Dendritic cell treated with granulocyte-macrophage colony-stimulating factor and Interleukin-4, amounts not matched to agents 40 ng/mL and 50 ng/mL, for 4 days (primary cell): ENCODE measurements at regions of chr2 and their contacts with region 1.

Region 1: GRCh38 chr2:17851731-17852585 is 26.5 kb upstream of the KCNS3 start:
- H3K4me3 Mint-ChIP-seq: no peak overlapping the region
- H3K27ac Mint-ChIP-seq: no peak overlapping the region
- H3K4me1 Mint-ChIP-seq: peaks cover under 1% of the 10 kb centered on the region
- H3K27me3 Mint-ChIP-seq: peaks cover 12% of the 10 kb centered on the region

Region 2: DNA sequence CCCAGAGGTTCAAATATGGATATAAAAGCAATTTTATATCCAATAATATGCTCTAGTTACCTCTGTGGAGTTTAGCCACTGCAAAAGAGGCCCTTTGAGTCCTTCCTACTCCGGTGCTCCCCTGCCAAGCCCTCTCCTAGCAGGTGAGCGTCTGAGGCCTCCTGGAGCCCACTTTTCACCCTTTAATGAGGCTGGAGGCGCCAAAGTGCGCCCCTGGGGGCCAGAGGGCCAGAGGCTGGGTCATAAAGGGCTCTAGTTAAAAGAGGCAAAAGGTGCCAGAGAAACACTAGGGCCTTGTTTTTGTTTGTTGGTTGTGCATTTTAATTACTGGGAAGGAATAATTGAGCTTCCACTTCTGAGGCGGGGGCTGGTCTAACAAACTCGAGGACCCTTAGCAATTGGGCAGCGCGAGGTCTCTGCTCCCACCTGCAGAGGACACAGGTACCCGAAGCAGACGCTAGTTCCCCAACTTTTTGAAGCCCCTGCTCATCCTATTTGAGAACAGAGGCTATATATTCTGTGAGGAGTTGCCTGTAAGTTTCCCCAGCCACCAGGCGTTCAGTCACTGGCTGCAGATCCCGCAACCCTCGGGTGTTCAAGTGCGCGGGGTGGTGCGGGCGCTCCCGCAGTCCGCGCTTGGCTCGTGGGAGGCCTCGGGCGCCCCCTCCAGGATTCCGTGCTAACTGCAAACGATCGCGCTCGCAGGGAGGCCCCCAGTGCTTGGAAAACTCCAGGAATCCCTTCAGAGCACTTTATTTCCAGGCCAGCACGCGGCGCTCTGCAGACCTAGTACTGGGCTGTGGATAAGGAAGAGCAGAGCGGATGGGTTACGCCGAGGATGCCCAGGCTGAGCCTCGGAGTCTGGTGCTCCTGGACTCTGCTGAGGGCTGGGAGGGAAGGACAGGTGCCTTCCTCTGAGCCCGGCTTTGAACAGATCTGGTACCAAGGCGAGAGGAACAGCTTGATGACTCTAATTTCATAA is 21.6 kb before region 1 on chr2:
- intact Hi-C with region 1: no loop called
- H3K4me3 Mint-ChIP-seq: peak overlapping the region; percentile 47
- H3K27ac Mint-ChIP-seq: no peak overlapping the region
- H3K4me1 Mint-ChIP-seq: peaks cover 11% of the 10 kb centered on the region
- H3K27me3 Mint-ChIP-seq: peaks cover 20% of the 10 kb centered on the region

Region 3: DNA sequence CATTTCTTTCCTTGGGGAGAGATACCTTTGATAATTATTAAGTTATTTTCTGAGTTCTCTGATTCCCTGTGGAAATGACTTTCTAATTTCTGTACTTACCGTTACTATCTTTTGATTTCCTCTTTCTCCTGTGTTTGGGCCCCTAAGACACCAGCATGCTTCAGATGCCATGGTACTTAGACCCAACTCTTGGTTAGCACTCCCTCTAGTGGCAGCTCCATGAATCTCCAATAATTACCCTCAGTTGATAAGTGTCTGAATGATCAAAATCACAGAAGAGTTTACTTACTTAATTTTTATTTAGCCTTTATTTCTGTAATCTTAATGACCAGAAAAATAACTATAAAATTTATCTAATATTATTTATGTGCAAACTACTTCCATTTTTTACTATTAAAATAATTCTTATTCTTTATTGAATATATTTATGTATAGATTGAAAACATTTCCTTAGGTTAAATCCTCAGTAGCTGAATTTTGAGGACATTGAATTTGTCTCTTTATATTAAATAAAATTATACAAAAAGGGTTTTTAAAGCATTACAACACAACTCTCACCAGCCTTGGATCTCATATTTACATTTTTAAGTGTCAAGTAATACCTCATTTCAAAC is 326.9 kb after region 1 on chr2:
- intact Hi-C with region 1: loop called (anchors 1 kb)
- H3K4me3 Mint-ChIP-seq: no peak overlapping the region
- H3K27ac Mint-ChIP-seq: no peak overlapping the region
- H3K4me1 Mint-ChIP-seq: no peaks in the 10 kb centered on the region
- H3K27me3 Mint-ChIP-seq: no peaks in the 10 kb centered on the region

Region 4: DNA sequence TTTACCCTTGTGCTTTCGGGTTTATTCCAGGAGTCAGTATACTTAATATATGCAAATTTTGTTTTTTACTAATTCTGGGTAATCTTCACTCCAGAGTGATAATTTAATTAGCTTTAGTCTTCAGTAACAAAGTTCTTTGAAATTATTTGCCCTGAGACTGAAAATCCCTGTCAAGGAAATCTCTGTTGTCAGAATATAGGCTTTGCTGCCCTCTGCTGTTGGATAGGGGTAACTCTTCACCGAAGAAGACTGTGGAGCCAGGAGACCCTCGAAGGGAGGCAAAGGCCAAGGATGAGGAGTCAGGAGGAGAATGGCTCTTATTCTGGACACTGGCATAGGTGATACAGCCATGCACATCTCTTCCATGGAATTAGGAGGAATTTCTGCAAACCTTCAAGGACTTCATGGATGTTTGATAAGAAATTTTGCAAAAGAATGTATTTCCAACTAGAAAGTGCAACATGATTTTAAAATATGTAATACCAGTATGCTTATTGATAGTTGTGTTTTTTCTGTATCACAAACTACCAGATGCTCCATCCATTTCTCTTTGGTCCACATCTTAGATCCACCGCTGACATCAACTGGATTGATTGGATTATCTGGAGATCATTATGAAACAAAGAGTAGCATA is 526.2 kb after region 1 on chr2:
- intact Hi-C with region 1: loop called (anchors 1 kb)
- H3K4me3 Mint-ChIP-seq: no peak overlapping the region
- H3K27ac Mint-ChIP-seq: no peak overlapping the region
- H3K4me1 Mint-ChIP-seq: peaks cover 11% of the 10 kb centered on the region
- H3K27me3 Mint-ChIP-seq: no peaks in the 10 kb centered on the region